Brain microvascular endothelial cell (primary cell): ENCODE measurements at regions of chr7 and their contacts with region 1.

Region 1: GRCh38 chr7:26853788-26854393 is 10.5 kb downstream of the SKAP2 start:
- DNase-seq: no peak
- H3K4me3 ChIP-seq: no peak overlapping the region
- H3K27ac ChIP-seq: no peak overlapping the region
- H3K27me3 ChIP-seq: peaks cover 24% of the 10 kb centered on the region
- CTCF ChIP-seq: peak; percentile 54

Region 2: DNA sequence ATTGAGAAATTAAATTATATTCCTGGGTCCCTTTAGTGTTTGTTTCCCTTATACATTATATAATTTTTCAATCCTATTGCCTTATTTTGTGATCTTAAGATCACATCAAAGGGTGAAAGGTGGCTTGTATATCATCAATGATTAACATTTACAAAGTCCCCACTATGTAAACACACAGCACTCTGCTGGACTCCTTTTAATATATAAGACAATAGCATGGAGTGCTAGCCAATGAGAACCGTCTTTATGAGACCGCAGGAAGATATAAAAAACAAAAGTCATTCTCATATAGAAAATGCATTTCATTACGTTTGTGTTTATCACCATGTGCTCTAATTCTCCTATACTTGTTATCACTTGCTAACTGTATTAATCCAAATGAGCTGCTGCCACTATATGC is 133.4 kb after region 1 on chr7:
- in situ Hi-C with region 1: no loop called
- DNase-seq: no peak
- H3K4me3 ChIP-seq: no peak overlapping the region
- H3K27ac ChIP-seq: no peak overlapping the region
- H3K27me3 ChIP-seq: no peaks in the 10 kb centered on the region
- CTCF ChIP-seq: no peak

Region 3: DNA sequence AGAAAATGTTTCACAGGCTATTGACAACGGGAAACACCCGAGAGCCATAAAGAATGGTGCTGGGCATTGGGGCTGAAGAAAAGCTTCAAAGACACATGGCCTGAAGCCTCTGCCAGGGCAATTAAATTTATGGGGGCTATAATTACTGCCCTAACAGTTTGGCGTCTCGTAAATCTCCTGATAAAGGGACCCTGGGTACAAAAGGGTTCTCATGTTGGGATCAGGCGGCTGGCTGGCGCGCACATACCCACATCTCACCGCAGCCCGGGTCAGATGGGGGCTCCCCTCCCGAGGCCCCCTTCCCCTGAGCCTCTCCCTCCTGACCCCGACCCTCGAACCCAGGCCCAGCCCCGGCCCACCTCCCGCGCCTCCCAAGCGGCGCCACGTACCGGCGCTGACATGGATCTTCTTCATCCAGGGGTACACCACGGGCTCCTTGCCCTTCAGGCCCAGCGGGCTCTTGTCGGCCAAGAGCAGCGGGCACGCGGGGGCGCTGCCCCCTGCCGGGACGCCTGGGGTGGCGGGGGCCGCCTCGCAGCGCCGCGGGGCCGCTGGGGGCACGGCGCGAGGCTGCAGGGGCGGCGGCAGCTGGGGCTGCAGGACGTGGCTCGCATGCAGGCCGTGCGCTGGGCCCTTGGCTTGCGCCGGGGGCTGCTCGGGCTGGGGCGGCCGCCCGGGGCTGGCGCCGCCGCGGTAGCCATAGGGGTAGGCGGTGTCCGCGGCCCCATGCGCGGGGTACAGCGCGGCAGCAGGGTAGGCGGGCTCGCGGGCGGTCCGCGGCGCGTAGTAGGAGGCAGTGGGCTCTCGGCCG is 276.0 kb after region 1 on chr7:
- in situ Hi-C with region 1: loop called (anchors 10 kb)
- DNase-seq: no peak
- H3K4me3 ChIP-seq: peak overlapping the region; percentile 30
- H3K27ac ChIP-seq: no peak overlapping the region
- H3K27me3 ChIP-seq: peaks cover 92% of the 10 kb centered on the region
- CTCF ChIP-seq: no peak